ENCODE measurements at regions of chr12 and their contacts with region 1.

Region 1: GRCh38 chr12:101135920-101136319 is 74.1 kb downstream of the SLC5A8 start:
- DNase-seq: no peak
- ATAC-seq: no peak
- H3K4me3 ChIP-seq: no peak overlapping the region
- H3K27ac ChIP-seq: no peak overlapping the region
- H3K4me1 ChIP-seq: no peaks in the 10 kb centered on the region
- H3K27me3 ChIP-seq: no peaks in the 10 kb centered on the region
- CTCF ChIP-seq: no peak
- POLR2A ChIP-seq: no peak
- RAD21 ChIP-seq: no peak

Region 2: DNA sequence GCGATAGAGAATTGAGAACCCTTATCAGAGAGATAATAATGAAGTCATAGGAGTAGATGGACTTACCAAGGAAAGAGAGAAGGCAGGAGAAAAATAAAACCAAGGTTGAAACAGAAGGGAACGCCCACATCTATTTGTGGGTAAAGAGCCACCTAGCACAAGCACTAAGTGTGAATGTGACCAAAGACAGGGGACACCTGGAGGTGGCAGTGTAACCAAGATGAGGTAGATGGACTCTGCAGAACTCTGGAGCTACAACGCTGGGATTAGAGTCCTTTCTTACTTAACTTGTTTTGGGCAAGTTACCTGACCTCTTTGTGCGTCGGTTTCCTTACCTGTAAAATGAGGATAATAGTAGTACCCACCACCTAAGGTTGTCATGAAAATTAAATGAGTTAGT is 27.8 kb before region 1 on chr12:
- CTCF ChIA-PET with region 1: no interaction called
- POLR2A ChIA-PET with region 1: no interaction called
- RAD21 ChIA-PET with region 1: no interaction called
- intact Hi-C with region 1: loop called (anchors 1 kb)
- DNase-seq: peak; percentile 7
- ATAC-seq: peak; percentile 77
- H3K4me3 ChIP-seq: no peak overlapping the region
- H3K27ac ChIP-seq: no peak overlapping the region
- H3K4me1 ChIP-seq: no peaks in the 10 kb centered on the region
- H3K27me3 ChIP-seq: no peaks in the 10 kb centered on the region
- CTCF ChIP-seq: peak; percentile 20 to 37 (median 36); a peak in 4 of 6 replicates
- POLR2A ChIP-seq: no peak
- RAD21 ChIP-seq: peak; percentile 49

Measured in HCT116 (cell line).